ENCODE measurements at regions of chr6 and their contacts with region 1.

Region 1: GRCh38 chr6:37868447-37868825 is 48.9 kb downstream of the ZFAND3 start:
- DNase-seq: peak; percentile 49
- H3K4me3 Mint-ChIP-seq: peak overlapping the region; percentile 31
- H3K27ac Mint-ChIP-seq: peak overlapping the region; percentile 91
- H3K4me1 Mint-ChIP-seq: peaks cover 48% of the 10 kb centered on the region
- H3K27me3 Mint-ChIP-seq: no peaks in the 10 kb centered on the region
- CTCF ChIP-seq: no peak

Region 2: DNA sequence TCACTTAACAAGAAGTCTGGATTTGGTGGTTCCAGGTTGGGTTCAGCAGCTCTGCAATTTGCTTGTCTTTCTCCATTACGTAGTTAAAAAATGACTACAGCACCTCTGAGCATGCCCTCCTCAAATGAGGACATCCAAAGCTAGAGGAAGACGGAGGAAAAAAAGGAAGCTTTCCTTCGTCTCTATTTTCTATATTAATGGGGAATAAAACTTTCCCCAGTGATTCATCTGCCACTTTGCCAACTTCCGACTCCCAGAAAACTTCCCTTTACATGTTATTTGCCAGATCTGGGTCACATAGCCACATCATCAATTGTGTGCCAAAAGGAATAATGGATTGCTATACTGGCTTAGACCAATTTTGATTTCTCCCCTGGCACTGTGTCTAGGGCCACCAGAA is 20.6 kb after region 1 on chr6:
- CTCF ChIA-PET with region 1: interaction called, 3 read pairs
- POLR2A ChIA-PET with region 1: interaction called, 10 read pairs
- intact Hi-C with region 1: no loop called
- DNase-seq: peak; percentile 43
- H3K4me3 Mint-ChIP-seq: peak overlapping the region; percentile 37
- H3K27ac Mint-ChIP-seq: peak overlapping the region; percentile 53
- H3K4me1 Mint-ChIP-seq: peaks cover 15% of the 10 kb centered on the region
- H3K27me3 Mint-ChIP-seq: no peaks in the 10 kb centered on the region
- CTCF ChIP-seq: no peak